Left cardiac atrium (tissue), 4 donors: ENCODE measurements at regions of chr4 and their contacts with region 1.

Region 1: DNA sequence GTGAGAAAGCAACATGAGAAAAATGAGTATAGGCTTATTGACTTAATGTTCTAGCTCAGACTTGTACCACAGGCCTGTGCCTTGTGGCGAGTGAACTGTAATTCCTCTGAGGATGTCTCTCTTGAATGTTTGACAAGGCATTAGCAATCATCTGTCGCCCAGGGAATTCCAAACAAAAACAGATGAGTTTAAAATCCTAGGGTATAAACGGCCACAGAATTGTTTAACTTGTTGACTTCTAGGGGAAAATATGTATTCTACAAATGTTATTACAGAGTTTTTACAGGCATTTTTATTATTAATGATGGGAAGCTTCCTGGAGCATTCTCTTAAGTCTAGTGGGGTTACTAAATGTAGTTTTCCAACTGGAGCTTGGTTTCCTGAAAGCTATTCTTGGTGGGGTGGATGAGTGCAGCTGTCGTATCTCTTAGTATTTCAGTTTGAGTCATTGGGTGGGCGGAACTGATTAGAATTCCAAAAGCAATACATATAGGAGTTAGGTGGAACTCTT is 40.6 kb downstream of the ARHGAP10 start:
- DNase-seq: no peak
- ATAC-seq: peak; percentile 43 to 66

Region 2: DNA sequence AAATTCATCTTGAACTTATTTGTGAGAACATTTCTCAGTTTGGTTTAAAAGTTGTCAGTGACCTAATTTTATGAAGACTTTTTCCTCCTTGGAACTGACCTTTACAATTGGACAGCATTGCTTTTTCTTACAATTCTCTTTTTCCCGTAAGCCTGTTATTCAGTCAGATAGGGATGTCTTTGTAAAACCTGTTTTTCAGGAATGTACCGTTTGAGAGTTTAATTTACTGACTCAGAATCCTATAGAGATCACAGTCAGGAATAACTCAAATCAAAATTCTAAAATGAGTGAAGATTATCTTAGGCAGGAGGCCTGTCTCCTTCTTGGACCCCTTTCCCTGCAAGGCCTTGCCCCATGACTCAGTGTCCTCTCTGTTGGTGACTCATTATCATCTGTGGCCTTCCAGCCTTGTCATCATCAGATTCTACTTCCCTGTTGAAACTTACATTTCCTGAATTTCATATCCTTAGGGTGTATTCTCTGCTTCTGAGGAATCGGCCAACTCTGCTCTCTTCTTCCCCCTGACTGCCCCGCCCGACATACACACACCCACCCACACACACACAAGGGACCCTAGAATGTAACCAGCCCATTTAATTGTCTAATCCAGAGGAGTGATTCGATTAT is 59.1 kb after region 1 on chr4:
- intact Hi-C with region 1: loop called in 1 of 2 experiments (anchors 10 kb)
- DNase-seq: peak; percentile 46
- ATAC-seq: peak; percentile 38 to 84

Region 3: DNA sequence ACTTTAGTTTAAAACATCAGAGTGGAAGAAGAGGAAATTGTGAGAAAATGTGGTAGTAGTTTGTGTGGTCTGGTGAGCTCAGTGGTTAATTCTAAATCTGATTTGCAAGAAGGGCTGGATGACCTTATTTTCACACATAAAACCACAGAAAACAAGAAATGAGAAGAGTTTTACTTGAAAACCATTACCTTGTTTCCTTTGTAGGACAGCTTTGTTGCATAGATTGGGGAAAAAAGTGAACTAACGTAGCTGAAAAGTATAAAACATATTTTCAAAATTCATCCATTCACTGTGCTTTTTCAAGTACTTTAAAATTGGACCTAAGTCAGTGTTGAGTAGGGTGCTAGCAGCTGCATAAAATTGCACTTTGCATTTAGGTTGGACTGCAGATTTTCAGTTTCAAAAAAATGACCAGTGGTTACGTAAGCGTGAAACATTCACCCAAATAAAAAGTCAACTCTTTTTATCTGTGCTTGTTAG is 170.7 kb after region 1 on chr4:
- intact Hi-C with region 1: no loop called
- DNase-seq: no peak
- ATAC-seq: no peak